A549 (cell line): ENCODE measurements at regions of chr17 and their contacts with region 1.

Region 1: DNA sequence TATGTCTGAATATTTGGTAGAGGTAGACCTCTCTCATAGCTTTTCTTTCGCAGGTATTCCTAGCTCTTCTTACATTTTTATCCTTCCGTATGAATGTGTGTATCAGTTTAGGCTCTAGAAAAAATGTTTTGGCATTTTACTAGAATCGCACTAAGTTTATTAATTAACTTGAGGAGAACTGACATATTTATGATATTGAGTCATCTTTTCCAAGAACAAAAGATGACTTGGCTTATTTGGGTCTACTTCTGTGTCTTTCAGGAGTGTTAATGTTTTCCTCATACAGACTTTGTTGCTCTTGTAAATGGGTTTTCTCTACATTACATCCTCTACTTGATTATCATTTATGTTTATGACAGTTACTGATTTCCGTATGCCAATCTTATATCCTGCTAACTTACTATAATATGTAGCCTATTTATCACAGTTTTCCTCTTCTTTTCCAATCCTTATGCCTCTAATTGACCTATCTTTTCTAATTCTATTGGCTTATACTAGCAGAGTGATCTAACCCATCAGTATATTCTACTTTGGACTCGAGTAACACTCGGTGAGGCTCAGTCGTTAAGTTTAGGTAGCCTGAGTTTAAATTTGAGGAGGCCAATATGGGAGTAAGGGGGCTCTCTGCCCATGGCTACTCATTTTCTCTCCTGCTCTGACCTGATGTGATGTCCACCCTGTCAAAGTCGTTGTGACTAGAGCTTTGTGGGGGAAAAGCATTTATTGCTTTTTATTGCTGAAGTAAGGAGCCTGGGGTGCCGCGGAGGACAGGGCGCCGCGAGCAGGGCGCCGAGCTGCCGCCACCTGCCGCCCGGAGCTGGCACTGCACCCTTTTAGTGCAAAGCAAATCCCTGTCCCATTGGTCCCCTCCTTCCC is 20.0 kb downstream of the ST6GALNAC1 start:
- DNase-seq: peak; percentile 74 to 91
- ATAC-seq: peak; percentile 85 to 96
- H3K4me3 ChIP-seq: peak overlapping the region; percentile 3; the same call in 1 of the 3 replicates
- H3K27ac ChIP-seq: peak overlapping the region; percentile 59 to 77; a peak in 5 of 6 replicates
- H3K4me1 ChIP-seq: peaks cover 11% of the 10 kb centered on the region
- CTCF ChIP-seq: peak; percentile 98
- EP300 ChIP-seq: no peak
- POLR2A ChIP-seq: no peak
- RAD21 ChIP-seq: peak; percentile 83 to 90

Region 2: DNA sequence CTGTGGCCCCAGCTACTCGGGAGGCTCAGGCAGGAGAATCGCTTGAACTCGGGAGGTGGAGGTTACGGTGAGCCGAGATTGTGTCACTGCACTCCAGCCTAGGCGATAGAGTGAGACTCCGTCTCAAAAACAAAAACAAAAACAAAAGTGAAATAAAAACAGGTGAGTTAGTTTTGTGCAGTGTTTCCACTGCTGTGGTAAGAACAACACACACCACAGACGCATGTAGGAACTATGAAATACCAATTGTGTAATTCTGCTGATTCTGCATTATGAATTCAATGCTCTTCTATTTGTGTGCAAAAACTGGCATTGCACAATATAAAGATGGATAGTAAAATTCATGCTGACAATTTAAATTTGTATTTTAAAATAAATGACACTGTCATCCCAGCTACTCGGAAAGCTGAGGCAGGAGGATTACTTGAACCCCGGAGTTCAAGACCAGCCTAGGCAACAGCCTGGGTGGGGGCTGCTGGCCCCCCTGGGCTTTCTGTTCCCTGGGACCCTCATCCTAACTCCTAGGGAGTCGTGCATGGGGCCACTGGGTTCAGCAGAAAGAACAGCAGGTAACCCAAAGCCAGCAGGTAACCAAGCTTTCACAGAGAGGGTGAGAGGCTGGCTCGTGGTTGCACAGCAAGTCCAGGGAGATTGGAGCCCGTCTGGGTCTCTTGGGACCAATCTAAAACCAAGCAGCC is 111.7 kb before region 1 on chr17:
- CTCF ChIA-PET with region 1: interaction called, 173 read pairs
- POLR2A ChIA-PET with region 1: no interaction called
- DNase-seq: no peak
- ATAC-seq: no peak
- H3K4me3 ChIP-seq: no peak overlapping the region
- H3K27ac ChIP-seq: no peak overlapping the region
- H3K4me1 ChIP-seq: no peaks in the 10 kb centered on the region
- CTCF ChIP-seq: no peak
- EP300 ChIP-seq: no peak
- POLR2A ChIP-seq: no peak
- RAD21 ChIP-seq: no peak

Region 3: GRCh38 chr17:76547184-76547641 is 76.3 kb before region 1 on chr17:
- CTCF ChIA-PET with region 1: interaction called, 25 read pairs
- POLR2A ChIA-PET with region 1: no interaction called
- DNase-seq: peak; percentile 72 to 74
- ATAC-seq: peak; percentile 66 to 89
- H3K4me3 ChIP-seq: no peak overlapping the region
- H3K27ac ChIP-seq: peak overlapping the region in 1 of 2 experiments; percentile 49; a peak in 4 of 6 replicates
- H3K4me1 ChIP-seq: peaks cover 36% of the 10 kb centered on the region
- CTCF ChIP-seq: peak; percentile 80
- EP300 ChIP-seq: no peak
- POLR2A ChIP-seq: no peak
- RAD21 ChIP-seq: peak; percentile 86 to 95

Region 4: DNA sequence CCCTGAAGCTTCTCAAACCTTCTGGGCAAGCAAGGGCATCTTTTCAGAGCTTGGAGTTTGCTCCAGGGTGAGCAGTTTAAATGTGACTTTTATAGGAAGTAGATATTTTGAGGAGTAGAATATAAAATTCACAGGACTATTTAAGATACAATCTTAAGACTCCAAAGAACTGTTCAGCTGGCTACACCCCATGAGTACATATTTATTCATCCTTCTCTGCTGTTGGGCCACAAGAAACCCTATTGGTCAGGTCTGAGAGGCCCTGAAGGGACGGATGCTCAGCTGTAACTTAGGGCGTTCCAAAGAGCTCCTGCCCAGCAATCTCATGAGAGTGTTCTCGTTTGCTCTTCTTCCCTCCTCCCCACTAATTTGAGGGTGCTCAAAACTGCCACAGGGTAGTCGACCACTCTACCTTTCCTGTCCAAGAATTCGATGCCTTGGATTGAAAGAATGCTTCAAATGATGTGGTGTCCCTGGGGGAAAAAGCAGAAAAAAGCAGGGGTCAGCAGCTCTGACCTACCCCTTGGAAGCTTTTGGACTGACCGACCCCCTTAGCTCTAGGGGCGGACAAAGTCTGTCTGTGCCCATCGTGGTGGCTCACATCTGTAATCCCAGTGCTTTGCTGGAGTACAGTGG is 45.0 kb before region 1 on chr17:
- CTCF ChIA-PET with region 1: interaction called, 45 read pairs
- POLR2A ChIA-PET with region 1: no interaction called
- DNase-seq: no peak
- ATAC-seq: peak in 1 of 2 experiments; percentile 32; a peak in 1 of 6 replicates
- H3K4me3 ChIP-seq: no peak overlapping the region
- H3K27ac ChIP-seq: no peak overlapping the region
- H3K4me1 ChIP-seq: no peaks in the 10 kb centered on the region
- CTCF ChIP-seq: no peak
- EP300 ChIP-seq: no peak
- POLR2A ChIP-seq: no peak
- RAD21 ChIP-seq: no peak

Region 5: DNA sequence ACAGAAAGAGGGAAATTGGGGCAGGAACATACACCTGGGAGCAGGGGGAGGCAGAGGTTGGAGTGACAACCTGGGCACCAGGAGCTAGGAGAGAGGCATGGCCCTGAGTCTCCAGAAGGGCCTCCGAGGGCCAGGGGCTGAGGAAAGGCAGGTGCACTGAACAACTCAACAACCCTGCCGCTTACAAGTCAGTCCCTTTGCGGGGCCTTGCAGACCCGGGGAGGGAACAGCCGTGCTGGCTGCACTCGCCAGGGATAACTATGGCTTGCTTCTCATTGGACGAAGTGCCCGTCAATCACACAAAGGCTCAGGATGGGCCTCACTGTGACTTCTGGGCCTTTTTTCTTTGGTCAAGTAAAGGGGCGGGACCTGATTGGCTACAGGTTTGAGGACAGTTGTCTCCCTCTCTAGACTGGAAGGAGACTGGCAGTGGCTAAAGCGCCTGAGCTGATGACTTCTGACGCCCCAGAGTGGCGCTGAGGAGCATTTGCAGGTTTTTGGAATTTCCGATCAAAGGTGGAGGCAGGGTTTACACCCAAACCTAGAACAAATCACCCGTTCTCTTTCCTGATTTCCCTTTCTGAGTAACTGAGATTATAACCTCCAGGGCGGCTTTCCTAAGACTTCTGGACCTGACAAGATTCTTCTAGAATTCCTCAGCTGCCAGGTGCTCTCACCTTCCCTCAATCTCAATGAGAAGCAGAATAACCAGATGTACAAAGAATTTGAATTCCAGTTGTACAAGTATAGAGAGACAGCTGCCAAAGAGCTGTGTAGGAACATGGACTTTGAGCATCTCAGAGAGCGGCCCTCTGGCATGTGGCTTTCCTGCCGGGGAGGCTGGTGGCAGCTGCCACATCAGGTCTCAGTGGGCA is 10.3 kb before region 1 on chr17:
- CTCF ChIA-PET with region 1: interaction called, 104 read pairs
- POLR2A ChIA-PET with region 1: interaction called, 9 read pairs
- DNase-seq: peak in 1 of 2 experiments; percentile 58
- ATAC-seq: peak; percentile 58 to 79; a peak in 5 of 6 replicates
- H3K4me3 ChIP-seq: no peak overlapping the region
- H3K27ac ChIP-seq: no peak overlapping the region
- H3K4me1 ChIP-seq: peaks cover 10% of the 10 kb centered on the region
- CTCF ChIP-seq: no peak
- EP300 ChIP-seq: no peak
- POLR2A ChIP-seq: no peak
- RAD21 ChIP-seq: 0 out of 5 replicates have a peak, but pooled peaks of 1 of the 2 experiments have one; percentile 14

Region 6: DNA sequence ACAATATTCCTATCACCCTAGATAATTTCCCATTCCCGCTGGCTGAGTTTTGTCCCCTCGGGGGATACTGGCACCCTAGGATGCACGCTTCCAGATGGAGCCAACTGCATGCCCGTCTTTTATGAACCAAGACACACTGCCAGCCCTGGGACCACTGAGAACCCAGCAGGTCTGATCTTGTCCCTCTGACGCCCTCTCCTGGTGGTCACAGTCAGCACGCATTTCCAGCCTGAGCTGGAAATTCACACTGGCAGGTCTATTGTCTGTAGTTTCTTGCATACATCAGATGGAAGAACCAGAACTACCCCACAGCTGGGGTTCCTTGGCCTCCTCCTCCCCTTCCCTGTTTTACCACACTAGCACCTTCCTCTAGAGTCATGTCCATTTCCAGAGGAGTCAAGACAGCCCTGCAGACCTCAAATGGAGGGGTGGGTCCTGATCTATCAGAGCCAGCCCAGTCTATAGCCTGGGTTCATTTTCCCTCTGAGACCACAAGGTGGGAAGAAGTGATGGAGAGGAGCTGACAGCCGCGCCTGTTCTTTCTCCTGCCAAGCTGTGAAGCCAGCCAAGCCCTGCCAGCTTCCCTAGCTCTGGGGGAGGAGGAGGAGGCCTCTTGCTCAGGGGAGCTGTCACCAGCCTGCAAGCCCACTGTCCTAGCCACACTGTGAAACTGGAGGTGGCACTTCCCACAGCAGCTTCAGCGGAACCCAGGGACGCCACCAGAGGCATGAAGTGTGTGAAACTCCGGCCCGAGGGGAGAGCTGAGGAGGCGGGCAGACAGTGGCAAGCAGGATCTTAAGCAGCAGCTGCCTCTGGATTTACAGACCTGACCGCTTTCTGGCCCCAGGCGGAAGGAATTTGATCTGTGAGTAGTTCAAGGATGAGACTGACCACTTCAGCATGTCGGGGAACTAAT is 58.0 kb after region 1 on chr17:
- CTCF ChIA-PET with region 1: interaction called, 69 read pairs
- POLR2A ChIA-PET with region 1: no interaction called
- DNase-seq: peak; percentile 77 to 84
- ATAC-seq: peak; percentile 75 to 90; a peak in 5 of 6 replicates
- H3K4me3 ChIP-seq: no peak overlapping the region
- H3K27ac ChIP-seq: no peak overlapping the region
- H3K4me1 ChIP-seq: no peaks in the 10 kb centered on the region
- CTCF ChIP-seq: peak; percentile 83
- EP300 ChIP-seq: no peak
- POLR2A ChIP-seq: no peak
- RAD21 ChIP-seq: peak; percentile 82 to 84